CD14-positive monocyte (primary cell): ENCODE measurements at regions of chr1 and their contacts with region 1.

Region 1: GRCh38 chr1:174743654-174744561 is 255.8 kb upstream of the CACYBP start:
- DNase-seq: peak; percentile 30 to 47 (median 43)
- H3K4me3 ChIP-seq: no peak overlapping the region
- H3K4me3 Mint-ChIP-seq: no peak overlapping the region
- H3K27ac ChIP-seq: no peak overlapping the region
- H3K27ac Mint-ChIP-seq: no peak overlapping the region
- H3K4me1 ChIP-seq: peaks cover 22 to 38% of the 10 kb centered on the region in 2 donors
- H3K4me1 Mint-ChIP-seq: peaks cover 39% of the 10 kb centered on the region
- H3K27me3 ChIP-seq: no peaks in the 10 kb centered on the region
- H3K27me3 Mint-ChIP-seq: no peaks in the 10 kb centered on the region
- CTCF ChIP-seq: peak; percentile 82

Region 2: GRCh38 chr1:174262349-174263241 is 481.3 kb before region 1 on chr1:
- intact Hi-C with region 1: loop called (anchors 5 to 10 kb)
- DNase-seq: peak in 2 of 3 donors; percentile 4 to 30
- H3K4me3 ChIP-seq: no peak overlapping the region
- H3K4me3 Mint-ChIP-seq: no peak overlapping the region
- H3K27ac ChIP-seq: no peak overlapping the region
- H3K27ac Mint-ChIP-seq: no peak overlapping the region
- H3K4me1 ChIP-seq: peaks cover 0 to 4% of the 10 kb centered on the region in 2 donors
- H3K4me1 Mint-ChIP-seq: peaks cover 11% of the 10 kb centered on the region
- H3K27me3 ChIP-seq: no peaks in the 10 kb centered on the region
- H3K27me3 Mint-ChIP-seq: peaks cover 0 to 3% (median 0%) of the 10 kb centered on the region in 3 donors
- CTCF ChIP-seq: peak; percentile 31

Region 3: GRCh38 chr1:174828264-174828663 is 84.4 kb after region 1 on chr1:
- intact Hi-C with region 1: no loop called
- DNase-seq: no peak
- H3K4me3 ChIP-seq: no peak overlapping the region
- H3K4me3 Mint-ChIP-seq: no peak overlapping the region
- H3K27ac ChIP-seq: no peak overlapping the region
- H3K27ac Mint-ChIP-seq: no peak overlapping the region
- H3K4me1 ChIP-seq: no peaks in the 10 kb centered on the region
- H3K4me1 Mint-ChIP-seq: no peaks in the 10 kb centered on the region
- H3K27me3 ChIP-seq: no peaks in the 10 kb centered on the region
- H3K27me3 Mint-ChIP-seq: no peaks in the 10 kb centered on the region
- CTCF ChIP-seq: no peak

Region 4: GRCh38 chr1:174883409-174883808 is 139.5 kb after region 1 on chr1:
- intact Hi-C with region 1: no loop called
- DNase-seq: no peak
- H3K4me3 ChIP-seq: no peak overlapping the region
- H3K4me3 Mint-ChIP-seq: no peak overlapping the region
- H3K27ac ChIP-seq: peak overlapping the region in 1 of 2 donors; percentile 9
- H3K27ac Mint-ChIP-seq: peak overlapping the region in 2 of 7 donors; percentile 5 to 10
- H3K4me1 ChIP-seq: peaks cover 4 to 15% of the 10 kb centered on the region in 2 donors
- H3K4me1 Mint-ChIP-seq: peaks cover 17% of the 10 kb centered on the region
- H3K27me3 ChIP-seq: no peaks in the 10 kb centered on the region
- H3K27me3 Mint-ChIP-seq: no peaks in the 10 kb centered on the region
- CTCF ChIP-seq: no peak